ENCODE measurements at regions of chr7 and their contacts with region 1.

Region 1: DNA sequence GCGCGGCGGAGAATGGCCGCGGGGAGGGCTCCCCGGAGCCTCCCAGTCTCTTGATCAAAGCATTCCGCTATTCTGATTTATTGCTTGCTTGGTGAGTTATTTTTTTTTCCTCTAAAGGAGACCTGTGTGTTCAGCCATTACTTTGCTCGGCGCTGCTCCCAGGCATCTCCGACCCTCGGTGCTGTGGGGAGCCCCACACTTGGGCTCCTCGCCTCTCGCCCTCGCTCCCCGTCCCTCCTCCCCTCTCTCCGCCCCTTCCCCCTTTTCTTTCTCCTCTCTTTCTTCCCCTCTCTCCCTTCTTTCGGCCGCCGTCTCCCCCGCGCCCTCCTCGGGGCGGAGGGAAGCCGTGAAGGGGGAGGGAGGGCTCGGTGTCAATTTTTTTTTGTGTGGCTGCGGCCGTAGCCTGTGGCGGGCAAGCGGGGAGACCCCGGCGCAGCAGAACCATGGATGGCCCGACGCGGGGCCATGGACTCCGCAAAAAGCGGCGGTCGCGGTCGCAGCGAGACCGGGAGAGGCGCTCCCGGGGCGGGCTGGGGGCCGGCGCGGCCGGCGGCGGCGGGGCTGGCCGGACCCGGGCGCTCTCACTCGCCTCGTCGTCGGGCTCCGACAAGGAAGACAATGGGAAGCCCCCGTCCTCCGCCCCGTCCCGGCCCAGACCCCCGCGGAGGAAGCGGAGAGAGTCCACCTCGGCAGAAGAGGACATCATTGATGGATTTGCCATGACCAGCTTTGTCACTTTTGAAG is 1.1 kb downstream of the AUTS2 start:
- DNase-seq: no peak
- ATAC-seq: peak; percentile 1; the same call in 1 of the 3 replicates
- H3K4me3 ChIP-seq: peak overlapping the region; percentile 97
- H3K27ac ChIP-seq: peak overlapping the region; percentile 29; the same call in 1 of the 2 replicates
- H3K4me1 ChIP-seq: peaks cover 18% of the 10 kb centered on the region
- H3K27me3 ChIP-seq: no peaks in the 10 kb centered on the region; a peak in 1 of 4 replicates
- CTCF ChIP-seq: no peak
- EP300 ChIP-seq: no peak
- POLR2A ChIP-seq: no peak; the same call in 1 of the 2 replicates
- RAD21 ChIP-seq: no peak

Region 2: DNA sequence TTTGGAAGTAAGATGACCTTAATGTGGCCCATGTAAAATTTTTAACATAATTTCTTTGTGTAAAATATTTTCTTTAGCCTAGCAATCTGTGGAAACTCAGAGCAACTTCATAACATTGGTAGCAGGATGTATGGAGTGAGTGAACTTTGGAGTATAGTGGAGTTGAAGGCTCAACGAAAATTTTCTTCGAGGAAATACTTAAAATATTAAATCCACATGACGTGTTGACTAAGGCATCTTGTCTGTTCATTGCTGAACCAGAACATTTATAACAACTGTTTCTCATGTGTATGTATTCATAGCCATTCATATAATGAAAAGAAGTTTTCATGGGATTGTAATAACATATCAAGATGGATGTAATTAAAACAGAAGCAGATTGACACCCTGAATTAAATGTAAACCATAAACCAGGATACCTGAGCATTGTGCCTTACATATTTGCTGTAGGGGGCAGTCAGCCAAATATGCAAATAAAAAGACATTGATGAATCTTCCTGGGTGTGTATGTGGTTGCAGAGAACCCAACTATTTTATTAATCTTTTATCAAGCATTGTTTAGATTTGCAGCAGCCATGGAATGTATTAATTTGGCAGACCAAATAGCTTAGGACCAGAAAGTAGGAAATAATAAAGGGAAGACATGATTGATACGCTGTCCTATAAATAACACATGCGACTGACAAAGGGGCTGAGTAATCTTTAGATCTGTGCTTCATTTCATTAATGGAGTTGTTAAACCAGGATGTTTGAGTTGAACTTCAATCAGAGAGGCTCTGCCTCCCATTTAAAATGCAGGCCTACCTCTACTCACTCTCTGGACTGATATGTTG is 10.4 kb after region 1 on chr7:
- CTCF ChIA-PET with region 1: interaction called, 4 read pairs
- POLR2A ChIA-PET with region 1: interaction called, 6 read pairs
- RAD21 ChIA-PET with region 1: no interaction called
- SMC1A ChIA-PET with region 1: interaction called, 10 read pairs
- in situ Hi-C with region 1: no loop called
- intact Hi-C with region 1: no loop called
- DNase-seq: no peak
- ATAC-seq: peak; percentile 48
- H3K4me3 ChIP-seq: no peak overlapping the region
- H3K27ac ChIP-seq: no peak overlapping the region
- H3K4me1 ChIP-seq: peaks cover 5% of the 10 kb centered on the region; the same call in 1 of the 2 replicates
- H3K27me3 ChIP-seq: no peaks in the 10 kb centered on the region
- CTCF ChIP-seq: no peak
- EP300 ChIP-seq: no peak
- POLR2A ChIP-seq: no peak
- RAD21 ChIP-seq: no peak

Region 3: DNA sequence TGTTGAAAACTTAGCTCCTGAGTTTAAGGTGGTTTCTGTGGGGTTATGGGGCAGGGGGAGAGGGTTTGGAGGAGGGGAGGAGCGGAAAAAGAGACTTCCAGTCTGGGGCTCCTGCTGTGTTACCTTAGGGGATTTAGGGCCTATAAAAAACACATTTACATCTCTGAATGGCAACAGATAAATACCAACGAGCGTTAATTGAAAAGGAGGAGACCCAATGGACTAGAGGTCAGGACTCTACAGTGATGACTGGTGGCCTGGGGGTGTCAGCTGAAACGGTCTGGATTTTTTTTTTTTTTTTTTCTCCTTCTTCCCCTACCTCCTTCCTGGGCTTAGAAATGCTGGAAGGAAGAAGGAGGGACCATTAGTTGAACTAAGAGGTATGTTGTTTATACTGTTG is 46.3 kb after region 1 on chr7:
- CTCF ChIA-PET with region 1: interaction called, 5 read pairs
- POLR2A ChIA-PET with region 1: interaction called, 5 read pairs
- RAD21 ChIA-PET with region 1: interaction called, 42 read pairs
- SMC1A ChIA-PET with region 1: interaction called, 10 read pairs
- in situ Hi-C with region 1: no loop called
- intact Hi-C with region 1: loop called (anchors 5 kb)
- DNase-seq: no peak
- ATAC-seq: no peak
- H3K4me3 ChIP-seq: no peak overlapping the region
- H3K27ac ChIP-seq: no peak overlapping the region
- H3K4me1 ChIP-seq: peaks cover 3% of the 10 kb centered on the region
- H3K27me3 ChIP-seq: no peaks in the 10 kb centered on the region
- CTCF ChIP-seq: no peak
- EP300 ChIP-seq: no peak
- POLR2A ChIP-seq: no peak
- RAD21 ChIP-seq: no peak

Region 4: DNA sequence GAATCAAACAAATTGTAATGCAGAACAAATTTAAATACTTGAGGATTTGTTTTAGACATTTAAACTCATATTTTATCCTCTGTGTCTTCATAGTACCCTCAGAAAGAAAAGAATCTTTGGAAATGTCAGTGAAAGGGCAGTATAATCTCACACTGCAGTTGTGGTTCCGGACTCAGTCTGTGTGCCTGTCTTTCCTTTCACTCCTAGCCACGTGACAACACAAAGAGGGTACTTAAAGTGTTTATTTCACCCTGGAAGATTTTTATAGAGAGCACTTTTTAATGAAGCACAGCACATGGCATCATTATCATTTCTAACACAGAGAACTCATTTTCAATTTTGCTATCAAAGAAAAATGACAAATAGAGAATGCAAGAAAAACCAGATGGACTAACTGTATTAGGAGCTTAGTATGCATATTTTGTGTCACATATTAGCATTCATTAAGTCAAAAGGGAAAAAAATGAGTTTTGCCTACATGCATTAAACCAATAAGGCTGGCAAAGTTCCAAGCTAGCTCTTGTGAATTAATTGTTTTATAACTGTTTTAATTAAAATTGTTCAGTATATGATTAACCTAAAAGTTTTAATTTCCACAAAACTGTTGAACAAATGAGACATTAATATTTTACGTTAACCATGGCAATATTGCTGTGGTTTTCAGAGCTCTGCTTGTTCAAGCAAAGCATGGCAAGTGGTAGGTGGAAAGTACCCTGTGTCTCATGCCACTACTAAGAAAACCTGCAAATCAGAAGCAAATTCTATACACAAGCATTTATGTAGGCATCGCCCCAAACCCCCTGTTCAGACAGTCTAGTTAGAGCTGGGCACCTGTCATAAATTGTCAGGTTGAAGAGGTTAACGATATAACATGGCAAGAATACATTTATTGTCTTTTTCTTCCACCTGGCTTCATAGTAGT is 64.8 kb after region 1 on chr7:
- CTCF ChIA-PET with region 1: interaction called, 11 read pairs
- POLR2A ChIA-PET with region 1: interaction called, 3 read pairs
- RAD21 ChIA-PET with region 1: interaction called, 24 read pairs
- SMC1A ChIA-PET with region 1: interaction called, 88 read pairs
- in situ Hi-C with region 1: no loop called
- intact Hi-C with region 1: no loop called
- DNase-seq: no peak
- ATAC-seq: peak; percentile 81
- H3K4me3 ChIP-seq: no peak overlapping the region
- H3K27ac ChIP-seq: peak overlapping the region; percentile 6; the same call in 1 of the 2 replicates
- H3K4me1 ChIP-seq: peaks cover 33% of the 10 kb centered on the region
- H3K27me3 ChIP-seq: no peaks in the 10 kb centered on the region
- CTCF ChIP-seq: no peak
- EP300 ChIP-seq: peak in 1 of 2 experiments; percentile 13; a peak in 1 of 4 replicates
- POLR2A ChIP-seq: no peak
- RAD21 ChIP-seq: no peak

Region 5: DNA sequence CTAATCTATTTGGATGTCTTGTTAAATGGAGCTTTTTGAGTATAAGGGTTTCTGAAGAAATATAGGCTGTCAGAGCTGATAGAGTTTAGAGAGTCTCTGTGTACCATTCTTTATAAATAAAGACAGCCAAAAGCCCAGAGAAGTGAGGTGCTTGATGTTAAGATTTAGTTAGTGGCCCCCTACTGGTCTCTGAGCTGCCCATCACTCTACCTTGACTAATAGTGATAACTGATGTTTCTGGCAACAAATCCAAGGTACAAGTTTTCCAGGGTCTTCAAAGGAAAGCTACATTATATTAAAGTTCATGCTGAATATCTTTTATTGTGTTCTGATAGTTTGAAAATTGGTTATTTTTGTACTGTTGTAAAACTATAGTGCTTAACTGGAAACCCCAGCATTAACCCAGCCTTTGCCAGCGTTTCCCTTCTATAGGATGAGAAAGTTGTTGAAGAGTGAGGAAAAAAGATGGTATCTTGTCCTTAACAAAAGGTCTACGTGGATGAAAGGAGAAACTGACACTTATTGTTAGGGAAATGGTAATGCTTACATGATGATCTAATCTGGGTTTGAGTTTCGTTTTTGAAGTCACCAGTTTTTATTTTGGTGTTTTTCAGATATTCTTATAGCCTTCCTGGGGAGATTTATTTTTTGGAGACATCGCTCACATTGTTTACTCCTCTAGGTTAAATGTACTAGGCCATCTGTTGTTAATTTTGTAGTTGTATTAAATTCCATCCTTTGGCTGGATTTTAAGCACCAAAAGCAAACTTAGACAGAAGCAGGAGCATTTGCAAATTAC is 77.9 kb after region 1 on chr7:
- CTCF ChIA-PET with region 1: interaction called, 9 read pairs
- POLR2A ChIA-PET with region 1: interaction called, 12 read pairs
- RAD21 ChIA-PET with region 1: interaction called, 39 read pairs
- SMC1A ChIA-PET with region 1: interaction called, 21 read pairs
- in situ Hi-C with region 1: no loop called
- intact Hi-C with region 1: loop called (anchors 5 kb)
- DNase-seq: no peak
- ATAC-seq: peak; percentile 52
- H3K4me3 ChIP-seq: no peak overlapping the region
- H3K27ac ChIP-seq: peak overlapping the region; percentile 77
- H3K4me1 ChIP-seq: peaks cover 38% of the 10 kb centered on the region
- H3K27me3 ChIP-seq: no peaks in the 10 kb centered on the region
- CTCF ChIP-seq: peak; percentile 41 to 51 (median 45)
- EP300 ChIP-seq: no peak
- POLR2A ChIP-seq: no peak
- RAD21 ChIP-seq: peak; percentile 56

Region 6: DNA sequence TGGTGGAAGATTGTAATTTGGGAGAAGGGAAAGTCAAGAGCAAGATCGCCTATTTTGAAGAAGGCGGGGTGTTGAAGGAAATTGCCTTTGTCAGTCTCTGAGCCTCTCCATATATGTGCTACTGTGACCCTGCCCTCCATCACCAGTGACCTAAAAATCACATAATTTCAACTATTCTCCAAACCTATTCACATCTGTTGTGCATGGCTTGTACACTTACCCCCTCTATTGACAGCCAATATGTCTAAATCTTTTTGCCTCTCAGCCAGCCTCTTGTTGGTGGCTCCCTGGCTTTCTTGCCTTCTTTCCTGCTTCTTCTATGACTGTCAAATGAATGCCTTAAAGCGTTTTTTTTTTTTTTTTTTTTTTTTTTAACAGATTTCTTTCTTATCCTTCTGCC is 294.5 kb after region 1 on chr7:
- CTCF ChIA-PET with region 1: no interaction called
- POLR2A ChIA-PET with region 1: no interaction called
- RAD21 ChIA-PET with region 1: no interaction called
- SMC1A ChIA-PET with region 1: interaction called, 3 read pairs
- in situ Hi-C with region 1: no loop called
- intact Hi-C with region 1: loop called (anchors 2 kb)
- DNase-seq: no peak
- ATAC-seq: peak; percentile 46
- H3K4me3 ChIP-seq: no peak overlapping the region
- H3K27ac ChIP-seq: no peak overlapping the region
- H3K4me1 ChIP-seq: peaks cover 34% of the 10 kb centered on the region
- H3K27me3 ChIP-seq: no peaks in the 10 kb centered on the region
- CTCF ChIP-seq: peak; percentile 53 to 74 (median 57); a peak in 5 of 6 replicates
- EP300 ChIP-seq: no peak
- POLR2A ChIP-seq: no peak
- RAD21 ChIP-seq: peak; percentile 88

Measured in GM12878 (cell line).